Heart left ventricle (tissue), 16 donors: ENCODE measurements at regions of chr18 and their contacts with region 1.

Region 1: GRCh38 chr18:25771841-25772240 is 318.6 kb downstream of the SS18 start:
- DNase-seq: no peak
- ATAC-seq: no peak
- H3K4me3 ChIP-seq: no peak overlapping the region
- H3K27ac ChIP-seq: no peak overlapping the region
- H3K4me1 ChIP-seq: no peaks in the 10 kb centered on the region
- H3K27me3 ChIP-seq: peaks cover 0 to 5% (median 0%) of the 10 kb centered on the region in 9 donors
- CTCF ChIP-seq: no peak
- POLR2A ChIP-seq: no peak

Region 2: GRCh38 chr18:25726298-25726697 is 45.5 kb before region 1 on chr18:
- intact Hi-C with region 1: loop called in 1 of 10 experiments (anchors 10 kb)
- DNase-seq: no peak
- ATAC-seq: peak in 1 of 4 donors; percentile 41
- H3K4me3 ChIP-seq: no peak overlapping the region
- H3K27ac ChIP-seq: no peak overlapping the region
- H3K4me1 ChIP-seq: no peaks in the 10 kb centered on the region
- H3K27me3 ChIP-seq: peaks cover 0 to 26% (median 0%) of the 10 kb centered on the region in 9 donors
- CTCF ChIP-seq: no peak
- POLR2A ChIP-seq: no peak